Posterior cingulate gyrus (tissue), 11 donors: ENCODE measurements at regions of chr10 and their contacts with region 1.

Region 1: DNA sequence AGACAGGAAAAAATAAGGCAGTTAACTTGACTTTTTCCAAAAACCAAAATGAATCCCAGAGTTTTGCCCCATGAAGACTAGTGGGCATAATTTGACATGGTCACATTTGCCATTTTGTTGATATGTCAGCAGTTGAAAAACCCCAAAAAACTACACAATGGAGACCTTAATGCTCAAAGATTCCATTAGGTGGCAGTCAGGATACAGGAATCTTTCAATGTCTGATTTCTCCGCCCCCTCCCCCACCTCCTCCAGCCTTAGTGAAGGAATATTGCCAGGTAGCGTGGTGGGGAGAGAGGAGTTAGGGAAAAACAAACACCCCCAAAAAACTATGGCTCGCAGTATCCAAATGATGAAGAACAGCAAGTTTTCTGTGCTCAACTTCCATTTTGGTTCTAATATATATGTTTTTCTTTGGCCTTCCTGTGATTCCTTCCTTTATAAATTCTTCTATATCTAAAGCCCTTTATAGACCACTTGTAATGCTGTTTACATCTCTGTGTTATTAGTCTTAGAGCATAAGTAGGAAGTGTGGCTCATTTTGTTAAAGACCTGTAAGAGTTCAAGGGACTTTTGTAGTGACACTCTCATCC is 6.7 kb upstream of the SMNDC1 start:
- DNase-seq: peak in 2 of 10 donors; percentile 14 to 17

Region 2: GRCh38 chr10:109912335-109913281 is 398.8 kb before region 1 on chr10:
- intact Hi-C with region 1: no loop called
- DNase-seq: no peak

Region 3: GRCh38 chr10:110497438-110498086 is 186.1 kb after region 1 on chr10 and contains the start of gene DUSP5:
- intact Hi-C with region 1: loop called (anchors 1 kb)
- DNase-seq: peak; percentile 81 to 99 (median 92)

Region 4: DNA sequence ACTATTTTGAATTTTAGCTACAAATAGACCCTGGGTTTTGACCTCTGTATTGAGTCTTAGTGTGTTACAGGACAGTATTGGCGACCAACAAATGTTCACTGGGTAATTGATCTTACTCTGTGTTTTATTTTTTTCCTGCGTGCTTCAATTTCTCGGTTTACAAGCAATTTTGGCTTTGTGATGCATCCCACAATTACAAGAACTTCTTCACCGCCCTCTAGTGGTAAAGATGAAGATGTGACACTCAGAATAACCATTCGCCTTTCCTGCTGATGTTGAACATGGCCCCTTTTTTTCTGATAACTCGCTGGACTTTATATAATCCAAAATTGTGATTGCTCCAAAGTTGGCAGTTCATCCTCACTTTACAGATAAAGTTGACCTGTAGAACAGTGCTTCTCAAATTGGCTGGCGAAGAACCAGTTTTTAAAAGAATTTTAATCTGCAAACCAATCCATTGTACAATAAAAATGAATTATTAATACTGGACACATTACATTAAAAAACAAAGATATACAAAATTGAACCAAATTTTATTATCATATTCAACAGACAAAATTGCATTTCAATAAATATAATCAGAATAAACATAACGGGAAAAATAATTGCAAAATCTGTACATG is 235.8 kb after region 1 on chr10:
- intact Hi-C with region 1: loop called (anchors 1 kb)
- DNase-seq: no peak

Region 5: DNA sequence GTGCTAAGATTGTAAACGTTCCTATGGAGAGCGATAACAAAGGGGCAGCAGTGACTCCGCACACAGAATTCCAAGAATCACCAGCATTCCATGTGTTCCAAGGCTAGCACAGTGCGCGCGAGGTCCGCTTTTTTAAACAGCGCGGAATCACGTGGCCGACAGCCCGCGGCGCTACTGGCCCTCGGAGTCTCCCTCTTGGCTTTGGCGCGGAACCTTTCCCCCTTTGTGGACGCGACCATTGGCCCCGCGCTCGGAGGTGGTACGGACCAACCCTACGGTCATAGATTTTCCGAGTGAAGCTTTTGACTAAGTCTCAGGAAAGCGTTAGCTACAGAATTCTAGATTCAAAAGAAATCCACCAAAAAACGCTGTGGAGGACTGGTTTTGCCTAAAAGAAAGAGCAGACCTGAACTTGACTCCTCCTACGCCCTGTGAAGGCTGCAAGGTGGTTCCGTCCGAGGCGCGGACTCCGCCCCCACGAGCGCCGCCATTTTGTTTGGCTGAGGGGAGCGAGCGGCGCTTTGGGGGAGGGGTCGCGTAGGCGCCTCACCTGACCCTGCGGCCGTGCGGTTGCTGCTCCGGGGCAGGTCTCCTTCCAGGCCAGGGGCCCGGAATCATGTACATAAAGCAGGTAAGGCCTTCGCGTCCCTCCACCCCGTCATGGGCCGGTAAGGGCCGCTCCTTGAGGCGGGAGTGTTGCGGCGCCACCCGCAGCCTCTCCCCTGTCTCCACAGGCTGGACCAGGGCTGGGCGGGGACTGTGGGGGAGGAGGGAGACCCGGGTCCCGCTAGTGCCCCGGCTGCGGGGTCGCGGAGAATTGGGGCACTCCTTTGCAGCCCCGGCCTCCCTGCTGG is 256.0 kb after region 1 on chr10 and contains the start of gene SMC3:
- intact Hi-C with region 1: loop called (anchors 5 kb)
- DNase-seq: peak; percentile 87 to 98 (median 91)

Region 6: DNA sequence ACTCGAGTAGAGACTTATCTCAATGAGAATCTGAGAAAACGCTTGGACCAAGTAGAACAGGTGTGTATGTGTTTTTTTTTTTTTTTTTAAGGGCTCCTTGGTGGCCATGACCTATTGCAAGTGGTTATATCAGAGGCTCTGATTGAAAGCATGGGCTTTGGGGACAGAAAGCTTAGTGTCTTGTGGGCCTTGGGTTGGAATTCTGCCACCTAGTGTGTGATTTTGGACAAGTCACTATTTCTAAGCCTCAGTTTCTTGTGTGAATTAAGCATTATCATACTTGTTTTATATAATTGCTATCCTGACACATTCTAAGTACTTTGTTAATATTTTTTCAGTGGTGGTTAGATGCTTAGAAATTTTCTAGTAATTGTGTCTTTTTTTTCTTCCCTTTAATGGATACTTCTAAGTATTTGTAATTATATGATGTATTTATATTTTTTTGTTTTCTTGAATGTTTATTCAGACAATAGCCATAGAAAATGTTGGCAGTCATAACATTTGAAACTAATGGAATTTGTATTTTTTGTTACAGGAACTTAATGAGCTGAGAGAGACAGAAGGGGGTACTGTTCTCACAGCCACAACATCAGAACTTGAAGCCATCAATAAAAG is 289.1 kb after region 1 on chr10:
- intact Hi-C with region 1: loop called (anchors 5 kb)
- DNase-seq: peak in 1 of 10 donors; percentile 51